GM10248 (cell line): ENCODE measurements at regions of chr17 and their contacts with region 1.

Region 1: DNA sequence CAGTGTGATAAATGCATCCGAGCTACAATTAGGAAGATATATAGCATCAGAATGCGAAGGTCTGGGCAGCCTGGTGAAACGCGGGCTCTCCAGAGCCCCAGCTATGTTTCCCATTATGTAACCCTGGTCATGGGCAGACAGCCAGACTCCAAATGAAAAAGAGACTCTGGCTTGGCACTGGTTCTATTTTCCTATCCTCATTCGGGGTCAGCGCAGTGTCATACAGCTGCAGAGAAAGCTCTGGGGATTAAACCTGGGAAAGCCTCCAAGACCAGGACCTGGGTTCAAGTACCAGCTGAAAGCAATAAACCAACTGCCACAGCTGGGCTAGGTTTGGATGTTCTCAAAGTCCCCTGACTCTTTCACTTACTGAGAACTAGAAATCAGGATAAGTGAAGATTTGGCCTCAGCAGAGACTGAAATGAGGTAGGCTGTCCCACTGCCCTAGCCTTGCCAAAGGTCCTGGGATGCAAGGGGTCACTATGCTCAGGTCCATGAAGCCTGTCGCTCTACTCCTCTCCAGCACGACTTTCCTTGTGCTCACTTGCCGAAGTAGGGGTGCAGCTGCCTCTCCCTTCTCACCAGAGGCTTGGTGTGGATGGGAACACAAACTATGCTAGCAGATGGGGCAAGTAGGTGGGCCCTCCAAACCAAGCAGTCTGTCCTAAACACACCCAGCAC is 123.8 kb downstream of the SMG6 start:
- DNase-seq: no peak
- CTCF ChIP-seq: no peak

Region 2: GRCh38 chr17:2190014-2190413 is 10.3 kb after region 1 on chr17:
- CTCF ChIA-PET with region 1: interaction called, 13 read pairs
- POLR2A ChIA-PET with region 1: no interaction called
- DNase-seq: no peak
- CTCF ChIP-seq: no peak